CD14-positive monocyte (primary cell): ENCODE measurements at regions of chr19 and their contacts with region 1.

Region 1: DNA sequence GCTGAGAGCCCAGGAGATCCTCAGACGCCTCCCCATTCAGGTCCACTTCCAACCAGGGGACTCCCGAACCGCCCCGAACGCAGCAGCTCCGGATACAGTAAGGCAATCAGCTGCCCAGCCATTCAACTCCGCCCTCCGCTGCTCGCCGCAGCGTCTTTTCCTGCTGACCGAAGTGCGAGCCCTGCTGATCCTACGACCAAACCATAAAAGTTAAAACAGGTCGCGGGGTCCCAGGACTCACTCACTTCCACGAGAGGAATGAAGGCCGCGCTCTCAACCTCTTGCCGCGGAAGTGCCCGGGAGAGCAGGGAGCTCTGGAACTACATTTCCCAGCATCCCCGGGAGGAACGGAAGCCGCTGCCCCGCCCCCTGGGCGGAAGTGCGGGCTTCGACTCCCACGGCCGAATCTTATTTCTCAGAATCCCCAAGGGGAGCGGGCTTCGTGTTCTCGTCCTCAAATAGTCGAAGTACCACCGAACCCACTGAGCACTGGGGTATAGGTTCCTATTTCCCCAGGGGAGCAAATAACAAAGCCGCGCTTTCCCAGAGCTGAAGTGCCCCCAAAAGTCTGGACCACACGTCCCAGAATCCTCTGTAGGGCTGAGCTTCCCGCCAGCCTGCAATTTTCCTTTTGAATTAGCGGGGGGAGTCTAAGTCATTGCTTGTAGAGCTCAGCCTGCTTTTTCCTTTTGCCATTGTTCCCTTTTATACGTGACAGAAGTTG is at the start of gene ZNF45:
- DNase-seq: peak; percentile 79 to 87 (median 85)
- H3K4me3 ChIP-seq: peak within 1 kb of the TSS; percentile 89 to 98 (median 94)
- H3K4me3 Mint-ChIP-seq: peak within 1 kb of the TSS; percentile 94 to 98
- H3K27ac ChIP-seq: peak within 1 kb of the TSS; percentile 61 to 85
- H3K27ac Mint-ChIP-seq: peak within 1 kb of the TSS; percentile 84 to 96 (median 90)
- H3K4me1 ChIP-seq: peaks cover 14 to 19% of the 10 kb centered on the region in 2 donors
- H3K4me1 Mint-ChIP-seq: peaks cover 18% of the 10 kb centered on the region
- H3K27me3 ChIP-seq: no peaks in the 10 kb centered on the region
- H3K27me3 Mint-ChIP-seq: peaks cover 0 to 5% (median 3%) of the 10 kb centered on the region in 3 donors
- CTCF ChIP-seq: no peak
- polyA plus RNA-seq, gene ZNF45: 2.1 to 6.3 (median 6.0) TPM

Region 2: GRCh38 chr19:43784981-43785808 is 150.0 kb before region 1 on chr19:
- intact Hi-C with region 1: no loop called
- DNase-seq: peak; percentile 71 to 89 (median 81)
- H3K4me3 ChIP-seq: peak overlapping the region in 1 of 3 experiments; percentile 55
- H3K4me3 Mint-ChIP-seq: peak overlapping the region; percentile 27 to 82
- H3K27ac ChIP-seq: peak overlapping the region; percentile 14 to 83
- H3K27ac Mint-ChIP-seq: peak overlapping the region; percentile 26 to 95 (median 81)
- H3K4me1 ChIP-seq: peaks cover 27 to 44% of the 10 kb centered on the region in 2 donors
- H3K4me1 Mint-ChIP-seq: peaks cover 44% of the 10 kb centered on the region
- H3K27me3 ChIP-seq: no peaks in the 10 kb centered on the region
- H3K27me3 Mint-ChIP-seq: peaks cover 0 to 5% (median 3%) of the 10 kb centered on the region in 3 donors
- CTCF ChIP-seq: peak; percentile 99

Region 3: DNA sequence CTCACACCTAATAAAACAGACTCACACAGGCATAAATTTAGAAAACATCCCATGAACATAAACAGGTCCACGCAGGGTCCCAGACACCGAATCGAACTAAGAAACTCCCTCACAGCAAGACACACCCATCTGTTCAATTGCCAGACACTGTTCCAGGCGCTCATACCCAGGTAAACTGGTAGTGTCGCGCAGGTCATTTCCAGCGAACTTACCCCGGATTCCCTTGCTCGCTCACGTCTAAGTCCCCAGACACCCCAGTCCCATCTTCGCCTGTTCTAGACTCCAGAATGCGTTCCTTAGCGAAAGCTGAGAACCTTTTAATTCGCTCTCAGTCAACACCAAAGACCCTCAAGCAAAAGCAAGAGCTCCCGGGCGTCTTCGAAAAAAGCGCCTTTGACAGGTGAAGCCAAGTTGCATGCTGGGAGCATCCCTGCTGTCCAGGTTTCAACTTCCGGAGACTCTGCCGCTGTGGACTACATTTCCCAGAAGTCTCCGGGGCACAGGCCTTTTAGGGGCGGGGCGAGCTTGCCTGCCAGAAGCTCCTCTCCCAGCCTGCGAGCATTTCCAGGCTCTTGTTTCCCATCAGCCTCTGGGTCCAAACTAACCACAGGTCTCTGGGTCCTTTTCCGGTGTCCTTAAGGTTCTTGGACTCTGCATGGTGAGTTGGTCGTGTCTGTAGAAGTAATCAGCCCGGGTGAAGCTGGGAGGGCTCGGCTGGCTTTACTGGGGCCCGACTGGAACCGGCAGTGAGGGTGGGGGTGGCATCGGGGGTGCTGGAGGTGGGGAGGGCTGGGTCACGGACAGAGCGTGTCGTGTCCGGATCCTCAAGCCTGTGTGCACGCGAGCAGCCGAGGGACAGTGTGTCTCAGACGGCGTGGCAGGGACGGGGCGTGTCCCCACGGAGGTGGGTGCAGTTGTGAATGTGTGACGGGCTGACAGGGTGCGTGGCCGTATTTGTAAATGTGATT is 108.1 kb before region 1 on chr19 and contains the start of gene ZNF283:
- intact Hi-C with region 1: loop called (anchors 5 to 10 kb)
- DNase-seq: peak; percentile 55 to 69 (median 69)
- H3K4me3 ChIP-seq: peak within 1 kb of the TSS; percentile 61 to 84 (median 69)
- H3K4me3 Mint-ChIP-seq: peak within 1 kb of the TSS; percentile 90 to 93
- H3K27ac ChIP-seq: peak within 1 kb of the TSS; percentile 22 to 72
- H3K27ac Mint-ChIP-seq: peak within 1 kb of the TSS; percentile 17 to 91 (median 60)
- H3K4me1 ChIP-seq: peaks cover 11 to 15% of the 10 kb centered on the region in 2 donors
- H3K4me1 Mint-ChIP-seq: peaks cover 15% of the 10 kb centered on the region
- H3K27me3 ChIP-seq: peaks cover under 1 to 4% of the 10 kb centered on the region in 2 donors
- H3K27me3 Mint-ChIP-seq: peaks cover 11 to 27% (median 13%) of the 10 kb centered on the region in 3 donors
- CTCF ChIP-seq: no peak
- polyA plus RNA-seq, gene ZNF283: 0.80 to 2.5 (median 2.0) TPM

Region 4: DNA sequence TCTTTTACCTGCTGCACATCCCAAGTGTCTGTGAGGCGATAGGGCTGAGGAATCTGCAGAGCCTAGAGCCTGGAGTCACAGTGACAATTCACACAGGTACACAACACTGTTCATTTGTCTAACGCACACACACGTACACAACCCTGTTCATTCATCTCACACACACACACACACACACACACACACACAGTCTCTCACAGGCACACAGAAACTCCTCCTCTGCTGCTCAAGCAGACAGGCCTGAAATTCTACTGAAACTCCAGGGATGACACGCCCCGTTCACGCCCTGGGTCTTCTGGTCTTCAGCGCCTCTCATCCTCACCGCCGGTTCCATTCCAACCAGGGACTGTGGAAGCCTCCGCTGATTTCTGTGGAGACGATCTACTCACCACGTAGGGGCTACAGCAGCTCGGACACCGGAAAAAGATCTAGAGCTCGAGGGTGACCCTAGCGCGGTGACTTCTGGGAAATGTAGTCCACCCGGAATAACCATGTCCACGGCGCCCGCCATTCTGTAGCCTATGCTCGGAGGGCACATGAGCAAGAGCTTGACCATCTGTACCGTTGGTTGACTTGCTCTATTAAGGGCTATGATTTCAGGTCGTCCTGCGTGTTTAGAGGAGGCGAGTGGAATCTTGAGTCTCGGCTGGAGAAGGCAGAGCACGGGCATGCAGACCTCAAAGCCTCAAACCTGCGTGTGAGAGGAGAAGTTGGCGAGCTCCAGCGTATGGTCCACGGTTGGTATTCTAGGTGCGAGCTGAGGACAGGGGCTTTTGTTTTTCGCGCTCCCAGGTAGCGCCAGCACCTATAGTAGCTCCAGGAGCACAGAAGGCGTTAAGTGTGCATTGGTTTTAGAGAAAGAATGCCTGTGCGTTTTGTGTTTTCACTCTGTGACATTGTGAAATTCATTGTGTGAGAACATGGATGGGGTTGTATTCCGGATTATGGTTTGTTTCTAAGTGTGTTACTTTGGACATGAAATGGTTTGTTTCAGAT is 33.5 kb before region 1 on chr19:
- intact Hi-C with region 1: loop called in 1 of 2 experiments (anchors 5 kb)
- DNase-seq: peak; percentile 51 to 72 (median 69)
- H3K4me3 ChIP-seq: peak overlapping the region; percentile 47 to 85 (median 82)
- H3K4me3 Mint-ChIP-seq: peak overlapping the region; percentile 90 to 97
- H3K27ac ChIP-seq: peak overlapping the region in 1 of 2 donors; percentile 57
- H3K27ac Mint-ChIP-seq: peak overlapping the region in 6 of 7 donors; percentile 44 to 85 (median 78)
- H3K4me1 ChIP-seq: peaks cover 12 to 13% of the 10 kb centered on the region in 2 donors
- H3K4me1 Mint-ChIP-seq: peaks cover 16% of the 10 kb centered on the region
- H3K27me3 ChIP-seq: no peaks in the 10 kb centered on the region
- H3K27me3 Mint-ChIP-seq: peaks cover 0 to 2% (median 1%) of the 10 kb centered on the region in 3 donors
- CTCF ChIP-seq: no peak

Region 5: GRCh38 chr19:44002566-44003460 is 67.7 kb after region 1 on chr19 and contains the start of gene ZNF230:
- intact Hi-C with region 1: loop called (anchors 5 to 10 kb)
- DNase-seq: peak; percentile 92 to 97 (median 95)
- H3K4me3 ChIP-seq: peak within 1 kb of the TSS; percentile 82 to 98 (median 92)
- H3K4me3 Mint-ChIP-seq: peak within 1 kb of the TSS; percentile 96 to 99
- H3K27ac ChIP-seq: peak within 1 kb of the TSS; percentile 83 to 86
- H3K27ac Mint-ChIP-seq: peak within 1 kb of the TSS; percentile 93 to 99 (median 96)
- H3K4me1 ChIP-seq: peaks cover 31 to 34% of the 10 kb centered on the region in 2 donors
- H3K4me1 Mint-ChIP-seq: peaks cover 31% of the 10 kb centered on the region
- H3K27me3 ChIP-seq: no peaks in the 10 kb centered on the region
- H3K27me3 Mint-ChIP-seq: peaks cover 0 to 4% (median 2%) of the 10 kb centered on the region in 3 donors
- CTCF ChIP-seq: no peak
- polyA plus RNA-seq, gene ZNF230: 1.0 to 3.9 (median 1.3) TPM

Region 6: DNA sequence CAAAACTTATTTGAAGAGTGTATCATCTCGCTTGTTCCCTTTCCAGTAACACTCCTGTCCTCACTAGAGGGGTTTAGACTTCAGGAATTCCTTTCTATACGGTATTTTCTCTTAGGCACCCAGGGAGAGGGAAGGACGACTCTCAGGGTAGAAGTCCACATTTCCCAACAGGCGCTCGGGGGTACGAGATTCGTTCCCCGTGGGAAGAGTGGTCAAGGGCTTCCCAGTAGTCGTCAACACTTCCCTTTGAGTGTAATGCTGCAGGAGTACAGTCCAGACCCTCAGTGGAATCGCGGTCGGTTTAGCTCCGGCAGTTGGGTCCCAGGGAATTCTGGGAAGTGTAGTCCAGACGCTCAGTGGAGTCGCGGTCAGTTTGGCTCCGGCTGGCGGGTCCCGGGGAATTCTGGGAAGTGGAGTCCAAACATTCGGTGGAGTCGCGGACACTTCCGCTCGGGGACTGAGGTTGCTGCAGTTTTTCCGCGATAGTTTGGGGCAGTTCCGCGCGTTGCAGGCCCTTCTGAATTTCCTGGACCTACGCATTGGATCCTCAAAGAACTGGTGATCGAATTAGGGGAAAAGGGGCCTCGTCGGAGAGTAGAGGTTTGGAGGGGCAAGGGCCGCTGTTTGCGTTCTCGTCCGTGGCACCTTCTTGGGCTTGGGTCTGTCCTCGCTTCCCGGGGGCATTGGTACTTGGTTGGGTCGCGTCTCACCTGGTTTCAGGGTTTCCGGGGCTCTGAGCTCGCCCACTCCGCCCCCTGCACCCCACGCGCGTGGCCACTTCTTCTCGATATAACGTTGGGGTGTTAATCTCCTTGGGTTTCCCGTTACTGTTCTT is 159.0 kb after region 1 on chr19 and contains the start of gene ZNF224:
- intact Hi-C with region 1: loop called in 1 of 2 experiments (anchors 10 kb)
- DNase-seq: peak; percentile 78 to 86 (median 82)
- H3K4me3 ChIP-seq: peak within 1 kb of the TSS; percentile 40 to 99 (median 85)
- H3K4me3 Mint-ChIP-seq: peak within 1 kb of the TSS; percentile 97 to 99
- H3K27ac ChIP-seq: peak within 1 kb of the TSS; percentile 37 to 81
- H3K27ac Mint-ChIP-seq: peak within 1 kb of the TSS; percentile 73 to 91 (median 81)
- H3K4me1 ChIP-seq: peaks cover 5 to 13% of the 10 kb centered on the region in 2 donors
- H3K4me1 Mint-ChIP-seq: peaks cover 9% of the 10 kb centered on the region
- H3K27me3 ChIP-seq: no peaks in the 10 kb centered on the region
- H3K27me3 Mint-ChIP-seq: peaks cover 2 to 3% (median 3%) of the 10 kb centered on the region in 3 donors
- CTCF ChIP-seq: no peak
- polyA plus RNA-seq, gene ZNF224: 2.9 to 30.1 (median 3.5) TPM

Region 7: GRCh38 chr19:44113138-44113783 is 178.1 kb after region 1 on chr19 and contains the start of gene ZNF225:
- intact Hi-C with region 1: loop called in 1 of 2 experiments (anchors 10 kb)
- DNase-seq: peak; percentile 92 to 96 (median 94)
- H3K4me3 ChIP-seq: peak within 1 kb of the TSS; percentile 92 to 94 (median 94)
- H3K4me3 Mint-ChIP-seq: peak within 1 kb of the TSS; percentile 98 to 100
- H3K27ac ChIP-seq: peak within 1 kb of the TSS; percentile 47 to 76
- H3K27ac Mint-ChIP-seq: peak within 1 kb of the TSS; percentile 87 to 95 (median 91)
- H3K4me1 ChIP-seq: peaks cover 17 to 27% of the 10 kb centered on the region in 2 donors
- H3K4me1 Mint-ChIP-seq: peaks cover 23% of the 10 kb centered on the region
- H3K27me3 ChIP-seq: no peaks in the 10 kb centered on the region
- H3K27me3 Mint-ChIP-seq: peaks cover 0 to 2% (median 0%) of the 10 kb centered on the region in 3 donors
- CTCF ChIP-seq: no peak
- polyA plus RNA-seq, gene ZNF225: 0.86 to 1.1 (median 0.93) TPM

Region 8: GRCh38 chr19:44500148-44500956 is 565.2 kb after region 1 on chr19 and contains the start of gene ZNF180:
- intact Hi-C with region 1: loop called in 1 of 2 experiments (anchors 5 kb)
- DNase-seq: peak; percentile 92 to 95 (median 94)
- H3K4me3 ChIP-seq: peak within 1 kb of the TSS; percentile 68 to 85 (median 70)
- H3K4me3 Mint-ChIP-seq: peak within 1 kb of the TSS; percentile 88 to 95
- H3K27ac ChIP-seq: peak within 1 kb of the TSS; percentile 69 to 87
- H3K27ac Mint-ChIP-seq: peak within 1 kb of the TSS; percentile 84 to 95 (median 91)
- H3K4me1 ChIP-seq: peaks cover 13 to 14% of the 10 kb centered on the region in 2 donors
- H3K4me1 Mint-ChIP-seq: peaks cover 23% of the 10 kb centered on the region
- H3K27me3 ChIP-seq: peaks cover 0 to 1% of the 10 kb centered on the region in 2 donors
- H3K27me3 Mint-ChIP-seq: peaks cover 14 to 23% (median 18%) of the 10 kb centered on the region in 3 donors
- CTCF ChIP-seq: peak; percentile 30
- polyA plus RNA-seq, gene ZNF180: 1.2 to 3.5 (median 2.7) TPM